ENCODE measurements at regions of chr6 and their contacts with region 1.

Region 1: DNA sequence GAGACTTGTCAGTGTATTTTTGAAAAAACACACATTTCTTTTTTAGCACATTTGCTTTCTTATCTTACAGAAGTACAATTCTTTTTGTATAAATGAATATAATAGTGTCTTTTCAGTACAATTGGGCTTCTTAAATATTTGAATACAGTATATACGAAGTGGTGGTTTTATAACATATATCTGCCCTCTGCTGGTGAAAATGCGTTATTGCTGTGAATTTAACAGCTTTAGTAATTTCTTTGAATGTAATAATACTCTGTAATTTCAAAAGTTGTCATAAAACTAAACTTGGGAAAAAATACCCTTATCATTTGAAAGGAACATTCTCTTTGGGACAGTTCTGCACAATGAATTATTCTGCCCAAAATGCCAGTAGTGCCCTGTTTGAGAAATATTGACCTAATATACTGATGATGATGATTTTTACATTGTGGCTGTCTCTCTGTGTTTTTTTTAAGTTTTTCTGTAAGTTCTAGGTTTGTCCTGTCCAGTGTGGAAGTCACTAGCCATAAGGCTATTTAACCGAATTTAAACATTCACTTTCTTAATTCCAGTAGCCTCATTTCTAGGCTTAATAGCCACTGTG is 19.0 kb downstream of the SMAP1 start:
- DNase-seq: no peak
- ATAC-seq: peak; percentile 75
- H3K4me3 ChIP-seq: no peak overlapping the region
- H3K27ac ChIP-seq: no peak overlapping the region
- H3K4me1 ChIP-seq: no peaks in the 10 kb centered on the region
- H3K27me3 ChIP-seq: no peaks in the 10 kb centered on the region
- CTCF ChIP-seq: peak; percentile 33 to 66 (median 60); a peak in 5 of 6 replicates
- EP300 ChIP-seq: no peak
- POLR2A ChIP-seq: no peak
- RAD21 ChIP-seq: peak; percentile 63

Region 2: GRCh38 chr6:70221025-70221714 is 465.5 kb before region 1 on chr6:
- CTCF ChIA-PET with region 1: interaction called, 22 read pairs
- POLR2A ChIA-PET with region 1: no interaction called
- RAD21 ChIA-PET with region 1: interaction called, 6 read pairs
- SMC1A ChIA-PET with region 1: no interaction called
- in situ Hi-C with region 1: no loop called
- intact Hi-C with region 1: loop called (anchors 2 kb)
- DNase-seq: no peak
- ATAC-seq: peak; percentile 76
- H3K4me3 ChIP-seq: no peak overlapping the region
- H3K27ac ChIP-seq: no peak overlapping the region
- H3K4me1 ChIP-seq: no peaks in the 10 kb centered on the region
- H3K27me3 ChIP-seq: no peaks in the 10 kb centered on the region; a peak in 1 of 4 replicates
- CTCF ChIP-seq: peak; percentile 59 to 66 (median 61)
- EP300 ChIP-seq: no peak
- POLR2A ChIP-seq: no peak
- RAD21 ChIP-seq: peak; percentile 82

Region 3: GRCh38 chr6:70413114-70413991 is 273.3 kb before region 1 on chr6 and contains the start of gene FAM135A:
- CTCF ChIA-PET with region 1: interaction called, 10 read pairs
- POLR2A ChIA-PET with region 1: interaction called, 4 read pairs
- RAD21 ChIA-PET with region 1: interaction called, 7 read pairs
- SMC1A ChIA-PET with region 1: interaction called, 8 read pairs
- in situ Hi-C with region 1: no loop called
- intact Hi-C with region 1: no loop called
- DNase-seq: peak; percentile 94
- ATAC-seq: peak; percentile 90
- H3K4me3 ChIP-seq: peak within 1 kb of the TSS; percentile 87
- H3K27ac ChIP-seq: peak within 1 kb of the TSS; percentile 74
- H3K4me1 ChIP-seq: no peaks in the 10 kb centered on the region
- H3K27me3 ChIP-seq: no peaks in the 10 kb centered on the region
- CTCF ChIP-seq: no peak
- EP300 ChIP-seq: no peak
- POLR2A ChIP-seq: peak; percentile 87
- RAD21 ChIP-seq: no peak
- polyA plus RNA-seq, gene FAM135A: 3.9 to 4.4 TPM

Region 4: DNA sequence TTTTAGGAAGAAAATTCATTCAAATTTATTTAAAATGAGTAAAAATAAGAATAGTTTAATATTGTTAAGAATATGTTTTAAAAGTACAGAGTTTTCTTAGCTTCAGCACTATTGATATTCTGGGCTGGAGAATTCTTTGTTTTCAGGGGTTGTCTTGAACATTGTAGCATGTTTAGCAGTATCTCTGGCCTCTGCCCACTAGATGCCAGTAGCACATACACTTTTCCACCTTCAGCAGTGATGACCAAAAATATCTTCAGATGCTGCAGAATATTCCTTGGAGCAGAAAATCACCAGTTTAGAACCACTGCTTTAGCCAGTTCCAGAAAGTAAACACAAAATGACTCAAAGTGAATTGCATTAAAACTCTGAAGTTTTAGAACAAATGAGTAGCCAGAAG is 139.3 kb before region 1 on chr6:
- CTCF ChIA-PET with region 1: interaction called, 70 read pairs
- POLR2A ChIA-PET with region 1: no interaction called
- RAD21 ChIA-PET with region 1: interaction called, 15 read pairs
- SMC1A ChIA-PET with region 1: interaction called, 12 read pairs
- in situ Hi-C with region 1: no loop called
- intact Hi-C with region 1: loop called (anchors 5 kb)
- DNase-seq: no peak
- ATAC-seq: peak; percentile 50; the same call in 1 of the 3 replicates
- H3K4me3 ChIP-seq: no peak overlapping the region
- H3K27ac ChIP-seq: no peak overlapping the region
- H3K4me1 ChIP-seq: no peaks in the 10 kb centered on the region
- H3K27me3 ChIP-seq: no peaks in the 10 kb centered on the region
- CTCF ChIP-seq: peak; percentile 33 to 49 (median 43); a peak in 5 of 6 replicates
- EP300 ChIP-seq: no peak
- POLR2A ChIP-seq: no peak
- RAD21 ChIP-seq: peak; percentile 62

Region 5: DNA sequence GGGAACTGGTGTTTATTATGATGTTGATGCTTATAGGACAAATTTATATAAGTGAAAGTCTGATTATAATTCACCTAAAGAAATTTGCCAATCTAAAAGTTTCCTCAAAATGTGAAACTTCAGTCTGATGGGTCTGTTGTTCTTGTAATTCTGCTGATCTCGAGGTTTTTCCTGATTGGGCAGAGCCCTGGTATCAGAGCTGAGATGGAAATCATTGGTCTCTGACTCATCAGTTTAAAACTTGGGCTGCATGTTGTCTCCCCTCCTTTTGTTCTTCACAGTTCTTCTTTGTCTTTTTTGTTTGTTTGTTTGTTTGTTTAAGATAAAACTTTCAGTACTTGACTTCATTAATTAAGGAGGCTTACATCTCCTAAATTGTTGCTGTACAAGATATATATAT is 13.0 kb before region 1 on chr6:
- CTCF ChIA-PET with region 1: interaction called, 38 read pairs
- POLR2A ChIA-PET with region 1: interaction called, 9 read pairs
- RAD21 ChIA-PET with region 1: interaction called, 13 read pairs
- SMC1A ChIA-PET with region 1: interaction called, 40 read pairs
- in situ Hi-C with region 1: no loop called
- intact Hi-C with region 1: loop called (anchors 2 kb)
- DNase-seq: no peak
- ATAC-seq: peak; percentile 28; the same call in 1 of the 3 replicates
- H3K4me3 ChIP-seq: no peak overlapping the region
- H3K27ac ChIP-seq: no peak overlapping the region
- H3K4me1 ChIP-seq: no peaks in the 10 kb centered on the region; the same call in 1 of the 2 replicates
- H3K27me3 ChIP-seq: no peaks in the 10 kb centered on the region
- CTCF ChIP-seq: no peak
- EP300 ChIP-seq: no peak
- POLR2A ChIP-seq: no peak
- RAD21 ChIP-seq: no peak

Region 6: DNA sequence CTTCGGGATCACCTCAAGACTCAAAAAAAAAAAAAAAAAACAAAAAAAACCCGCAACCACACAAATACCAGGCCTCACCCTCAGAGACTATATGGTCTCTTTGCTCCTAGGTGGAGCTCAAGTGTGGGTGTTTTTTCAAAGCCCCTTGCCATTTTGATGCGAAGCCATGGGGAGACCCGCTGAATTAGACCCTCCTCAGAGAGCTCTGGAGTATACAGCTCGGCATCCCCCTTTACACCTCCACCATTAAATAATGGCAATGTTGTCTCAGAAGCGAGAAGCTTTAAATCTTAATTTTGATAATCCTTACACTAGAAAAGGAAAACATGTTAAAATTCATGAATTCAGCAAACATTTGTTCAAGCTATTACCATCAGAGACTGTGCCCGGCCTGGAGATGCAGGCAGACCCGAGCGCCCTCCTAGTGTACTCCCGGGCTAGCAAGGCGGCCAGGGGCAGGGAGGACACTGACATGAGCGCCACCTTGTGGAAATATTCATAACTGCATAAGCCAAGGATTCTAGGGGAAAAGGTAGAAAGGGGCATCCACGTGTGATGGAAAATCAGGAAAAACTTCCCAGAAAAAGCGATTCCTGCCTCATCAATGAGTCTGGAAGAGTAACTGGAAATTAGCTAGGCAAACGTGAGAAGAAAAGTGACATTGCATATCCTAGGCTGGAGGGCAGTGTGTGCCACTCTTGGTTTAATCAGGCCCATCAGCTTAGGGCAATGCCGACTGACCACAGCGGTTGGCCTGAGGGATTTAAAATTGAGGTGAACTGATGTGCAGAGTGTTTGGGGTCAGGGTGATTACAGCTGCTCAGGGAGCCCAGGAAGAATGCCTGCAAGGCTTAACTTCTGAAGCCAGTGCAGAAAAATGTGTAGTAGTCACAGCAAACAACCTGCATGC is 197.7 kb after region 1 on chr6:
- CTCF ChIA-PET with region 1: interaction called, 10 read pairs
- POLR2A ChIA-PET with region 1: no interaction called
- RAD21 ChIA-PET with region 1: interaction called, 3 read pairs
- SMC1A ChIA-PET with region 1: interaction called, 3 read pairs
- in situ Hi-C with region 1: no loop called
- intact Hi-C with region 1: no loop called
- DNase-seq: peak; percentile 19
- ATAC-seq: peak; percentile 94
- H3K4me3 ChIP-seq: no peak overlapping the region
- H3K27ac ChIP-seq: no peak overlapping the region
- H3K4me1 ChIP-seq: no peaks in the 10 kb centered on the region
- H3K27me3 ChIP-seq: no peaks in the 10 kb centered on the region
- CTCF ChIP-seq: peak; percentile 75 to 89 (median 87); a peak in 4 of 6 replicates
- EP300 ChIP-seq: no peak
- POLR2A ChIP-seq: no peak
- RAD21 ChIP-seq: peak; percentile 97